ENCODE measurements at regions of chr6 and their contacts with region 1.

Region 1: GRCh38 chr6:134174672-134175198 is 122.3 kb upstream of the SLC2A12 start:
- DNase-seq: peak; percentile 96
- ATAC-seq: peak; percentile 78
- H3K4me3 Mint-ChIP-seq: peak overlapping the region; percentile 96
- H3K27ac Mint-ChIP-seq: peak overlapping the region; percentile 94
- H3K4me1 Mint-ChIP-seq: peaks cover 64% of the 10 kb centered on the region
- H3K27me3 Mint-ChIP-seq: no peaks in the 10 kb centered on the region

Region 2: GRCh38 chr6:133952815-133953633 is 221.7 kb before region 1 on chr6 and contains the start of gene TBPL1:
- CTCF ChIA-PET with region 1: no interaction called
- POLR2A ChIA-PET with region 1: no interaction called
- intact Hi-C with region 1: loop called in 1 of 2 experiments (anchors 1 kb)
- DNase-seq: peak; percentile 92
- ATAC-seq: peak; percentile 90
- H3K4me3 Mint-ChIP-seq: peak within 1 kb of the TSS; percentile 98
- H3K27ac Mint-ChIP-seq: peak within 1 kb of the TSS; percentile 93
- H3K4me1 Mint-ChIP-seq: peaks cover 38% of the 10 kb centered on the region
- H3K27me3 Mint-ChIP-seq: no peaks in the 10 kb centered on the region
- total RNA-seq, gene TBPL1: 32.2 to 33.9 TPM

Region 3: GRCh38 chr6:134247231-134247833 is 72.6 kb after region 1 on chr6:
- CTCF ChIA-PET with region 1: interaction called, 3 read pairs
- POLR2A ChIA-PET with region 1: interaction called, 3 read pairs
- intact Hi-C with region 1: loop called (anchors 1 to 2 kb)
- DNase-seq: peak; percentile 84
- ATAC-seq: peak; percentile 91
- H3K4me3 Mint-ChIP-seq: peak overlapping the region; percentile 16
- H3K27ac Mint-ChIP-seq: peak overlapping the region; percentile 94
- H3K4me1 Mint-ChIP-seq: peaks cover 56% of the 10 kb centered on the region
- H3K27me3 Mint-ChIP-seq: no peaks in the 10 kb centered on the region

Region 4: DNA sequence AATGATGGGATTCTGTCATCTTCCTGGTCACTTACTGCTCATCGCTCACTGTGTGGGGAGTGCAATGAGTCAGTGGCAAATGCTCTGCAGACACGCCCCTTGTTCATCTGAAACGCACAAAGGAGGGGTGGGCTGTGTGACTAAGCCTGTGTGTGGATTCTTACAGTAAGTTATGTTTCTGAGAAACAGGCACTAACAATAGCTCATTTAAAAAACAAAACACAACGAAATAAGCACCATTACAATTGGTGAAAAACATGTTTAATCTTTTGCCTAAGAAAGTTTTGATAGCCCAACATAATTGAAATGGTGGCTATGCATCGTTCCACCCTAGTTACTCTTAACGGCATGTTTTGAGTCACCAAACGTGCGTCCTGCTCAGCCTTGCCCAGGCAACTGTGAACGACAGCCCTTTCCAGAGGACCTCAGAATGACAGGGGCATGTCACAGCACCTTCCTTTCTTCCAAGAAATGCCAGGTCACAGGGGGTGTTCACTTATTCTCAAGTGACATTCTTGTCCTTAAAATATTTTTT is 261.6 kb after region 1 on chr6:
- CTCF ChIA-PET with region 1: no interaction called
- POLR2A ChIA-PET with region 1: interaction called, 3 read pairs
- intact Hi-C with region 1: loop called (anchors 1 to 2 kb)
- DNase-seq: peak; percentile 84
- ATAC-seq: peak; percentile 90
- H3K4me3 Mint-ChIP-seq: no peak overlapping the region
- H3K27ac Mint-ChIP-seq: peak overlapping the region; percentile 80
- H3K4me1 Mint-ChIP-seq: peaks cover 36% of the 10 kb centered on the region
- H3K27me3 Mint-ChIP-seq: no peaks in the 10 kb centered on the region

Region 5: DNA sequence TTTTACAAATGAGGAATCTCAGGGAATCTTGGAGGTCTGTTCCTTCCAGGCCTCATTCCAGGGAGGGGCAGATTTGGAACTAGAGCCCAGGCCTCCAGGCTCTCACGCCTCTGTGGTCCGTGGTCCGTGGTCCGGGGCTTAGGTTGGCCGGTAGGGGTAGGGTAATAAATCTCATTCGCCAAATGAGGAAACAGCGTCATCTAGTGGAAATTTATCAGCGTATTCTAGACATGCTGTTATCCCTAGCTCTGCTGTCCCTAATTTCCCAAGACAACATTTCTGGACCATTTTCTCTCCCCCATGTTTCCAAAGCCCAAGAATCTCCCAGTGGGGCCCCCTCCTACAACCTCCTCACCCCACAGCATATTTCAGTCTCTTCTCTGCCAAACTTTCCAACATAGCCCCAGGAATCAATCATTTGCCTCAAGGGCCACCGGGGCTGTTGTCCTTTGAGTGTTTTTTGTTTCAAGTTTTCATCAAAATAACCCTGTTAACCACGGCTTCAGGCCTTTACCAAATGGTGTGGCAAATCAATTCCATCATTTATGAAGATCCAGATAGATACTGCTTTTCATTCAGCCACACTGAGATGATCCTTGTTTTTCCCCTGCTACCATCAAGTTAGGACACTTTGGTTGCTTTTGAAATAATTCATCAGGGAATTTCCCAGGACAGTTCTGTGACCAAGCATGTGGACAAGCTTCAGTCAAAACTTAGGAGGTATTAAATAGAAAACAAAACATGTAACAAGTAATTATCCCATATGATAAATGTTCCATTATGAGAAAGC is 648.4 kb after region 1 on chr6:
- CTCF ChIA-PET with region 1: interaction called, 11 read pairs
- POLR2A ChIA-PET with region 1: no interaction called
- intact Hi-C with region 1: loop called (anchors 1 kb)
- DNase-seq: peak; percentile 36
- ATAC-seq: peak; percentile 86
- H3K4me3 Mint-ChIP-seq: no peak overlapping the region
- H3K27ac Mint-ChIP-seq: no peak overlapping the region
- H3K4me1 Mint-ChIP-seq: peaks cover 4% of the 10 kb centered on the region
- H3K27me3 Mint-ChIP-seq: peaks cover 2% of the 10 kb centered on the region

Region 6: DNA sequence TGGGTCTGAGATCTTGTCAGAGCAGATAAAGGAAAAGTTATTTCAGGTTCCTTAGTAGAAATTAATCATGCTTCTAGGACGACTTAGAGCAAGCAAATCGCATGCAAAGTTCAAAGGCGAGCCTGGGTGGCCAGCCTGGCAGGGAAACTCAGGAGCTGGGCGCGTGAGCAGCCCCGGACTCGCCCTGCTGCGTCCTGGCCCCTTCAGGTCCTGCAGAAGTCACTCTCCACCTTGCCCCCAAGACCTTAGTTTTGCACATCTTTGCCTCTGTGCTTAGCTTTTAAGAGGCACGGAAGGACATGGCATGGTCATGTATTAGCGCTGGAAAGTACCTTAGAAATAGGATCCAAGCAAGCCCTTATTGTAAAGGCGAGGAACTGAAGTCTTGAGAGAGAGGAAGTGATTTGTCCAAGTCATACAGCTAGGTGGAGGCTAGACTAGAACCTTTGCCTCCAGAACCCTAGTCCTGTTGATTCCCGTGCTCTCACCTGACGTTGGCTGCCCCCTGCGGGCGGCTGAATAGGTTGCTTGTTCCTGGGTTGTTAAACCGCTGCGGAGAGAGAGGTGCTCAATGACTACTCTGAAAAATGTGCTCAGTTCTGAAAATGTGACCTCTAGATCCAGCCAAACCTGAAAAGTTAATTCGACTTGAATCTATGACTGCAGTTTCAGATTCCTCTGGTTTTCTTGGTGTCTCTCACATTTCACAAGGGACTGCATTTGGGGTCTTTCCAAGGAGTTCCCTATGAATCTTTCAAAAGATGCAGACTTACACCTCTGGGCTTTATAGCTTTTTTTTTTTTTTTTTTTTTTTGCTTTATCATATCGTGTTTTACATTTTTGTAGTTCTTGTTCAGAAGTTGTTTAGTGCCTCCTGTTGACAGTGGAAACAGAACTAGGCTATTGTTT is 1009.1 kb after region 1 on chr6:
- CTCF ChIA-PET with region 1: no interaction called
- POLR2A ChIA-PET with region 1: no interaction called
- intact Hi-C with region 1: loop called in 1 of 2 experiments (anchors 10 kb)
- DNase-seq: peak; percentile 92
- ATAC-seq: peak; percentile 55
- H3K4me3 Mint-ChIP-seq: peak overlapping the region; percentile 91
- H3K27ac Mint-ChIP-seq: peak overlapping the region; percentile 93
- H3K4me1 Mint-ChIP-seq: peaks cover 26% of the 10 kb centered on the region
- H3K27me3 Mint-ChIP-seq: no peaks in the 10 kb centered on the region

Measured in activated CD4-positive, alpha-beta T cell treated with anti-CD3 and anti-CD28 coated beads for 36 hours (primary cell).